Activated CD4-positive, alpha-beta T cell treated with anti-CD3 and anti-CD28 coated beads for 36 hours (primary cell): ENCODE measurements at regions of chr10 and their contacts with region 1.

Region 1: GRCh38 chr10:17375936-17376584 is 78.3 kb downstream of the ST8SIA6 start:
- DNase-seq: peak; percentile 68
- ATAC-seq: no peak
- H3K4me3 Mint-ChIP-seq: no peak overlapping the region
- H3K27ac Mint-ChIP-seq: no peak overlapping the region
- H3K4me1 Mint-ChIP-seq: no peaks in the 10 kb centered on the region
- H3K27me3 Mint-ChIP-seq: peaks cover 9% of the 10 kb centered on the region

Region 2: DNA sequence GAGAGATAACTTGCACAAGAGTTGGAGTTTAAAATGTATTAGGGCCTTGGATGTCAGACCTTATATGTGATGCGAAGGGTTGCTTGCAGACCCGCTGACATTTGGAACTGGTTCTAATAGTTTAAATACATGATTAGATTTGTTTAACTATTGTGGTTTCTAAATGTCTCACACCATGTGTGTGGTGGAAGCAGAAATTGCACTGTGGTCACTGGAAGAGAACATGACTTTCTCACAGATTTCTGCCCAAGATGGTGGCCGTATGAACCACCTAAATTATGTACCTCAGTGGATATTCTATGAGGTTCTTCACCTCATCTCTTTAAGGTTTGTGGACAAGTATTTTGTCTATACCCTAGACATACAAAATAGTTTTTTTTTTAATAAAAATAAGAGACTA is 846.2 kb before region 1 on chr10:
- CTCF ChIA-PET with region 1: no interaction called
- POLR2A ChIA-PET with region 1: no interaction called
- intact Hi-C with region 1: no loop called
- DNase-seq: no peak
- ATAC-seq: no peak
- H3K4me3 Mint-ChIP-seq: no peak overlapping the region
- H3K27ac Mint-ChIP-seq: no peak overlapping the region
- H3K4me1 Mint-ChIP-seq: no peaks in the 10 kb centered on the region
- H3K27me3 Mint-ChIP-seq: peaks cover 5% of the 10 kb centered on the region

Region 3: DNA sequence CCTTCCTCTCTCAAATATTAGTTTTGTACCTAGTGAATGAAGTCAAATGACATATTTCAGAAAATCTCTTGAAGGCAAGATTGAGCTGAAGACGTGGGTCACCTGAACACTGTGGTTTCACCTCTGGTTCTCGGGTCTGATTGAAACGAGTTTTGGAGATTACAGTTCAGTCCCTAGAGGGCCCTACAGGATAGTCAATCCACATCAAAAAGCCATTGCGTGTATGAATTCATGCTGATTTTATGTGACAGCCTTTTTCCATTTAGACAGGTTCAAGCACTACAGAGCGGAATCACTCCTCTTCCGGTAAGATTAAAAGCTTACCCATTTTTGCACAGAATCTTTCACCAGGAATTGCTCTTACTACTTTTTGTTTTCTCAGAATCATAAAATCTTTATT is 85.8 kb before region 1 on chr10:
- CTCF ChIA-PET with region 1: interaction called, 7 read pairs
- POLR2A ChIA-PET with region 1: no interaction called
- intact Hi-C with region 1: loop called in 1 of 2 experiments (anchors 5 kb)
- DNase-seq: peak; percentile 25
- ATAC-seq: peak; percentile 96
- H3K4me3 Mint-ChIP-seq: no peak overlapping the region
- H3K27ac Mint-ChIP-seq: no peak overlapping the region
- H3K4me1 Mint-ChIP-seq: peaks cover 12% of the 10 kb centered on the region
- H3K27me3 Mint-ChIP-seq: peaks cover 23% of the 10 kb centered on the region

Region 4: GRCh38 chr10:17387861-17388508 is 11.9 kb after region 1 on chr10:
- CTCF ChIA-PET with region 1: interaction called, 20 read pairs
- POLR2A ChIA-PET with region 1: no interaction called
- intact Hi-C with region 1: no loop called
- DNase-seq: no peak
- ATAC-seq: no peak
- H3K4me3 Mint-ChIP-seq: no peak overlapping the region
- H3K27ac Mint-ChIP-seq: no peak overlapping the region
- H3K4me1 Mint-ChIP-seq: no peaks in the 10 kb centered on the region
- H3K27me3 Mint-ChIP-seq: no peaks in the 10 kb centered on the region